CD14-positive monocyte (primary cell): ENCODE measurements at regions of chr11 and their contacts with region 1.

Region 1: GRCh38 chr11:96342961-96343711 is at the start of gene MAML2:
- DNase-seq: peak; percentile 89 to 97 (median 92)
- H3K4me3 ChIP-seq: peak within 1 kb of the TSS; percentile 75 to 100 (median 100)
- H3K4me3 Mint-ChIP-seq: peak within 1 kb of the TSS; percentile 95 to 98
- H3K27ac ChIP-seq: peak within 1 kb of the TSS in 1 of 2 donors; percentile 93
- H3K27ac Mint-ChIP-seq: peak within 1 kb of the TSS; percentile 85 to 99 (median 94)
- H3K4me1 ChIP-seq: peaks cover 43 to 50% of the 10 kb centered on the region in 2 donors
- H3K4me1 Mint-ChIP-seq: peaks cover 47% of the 10 kb centered on the region
- H3K27me3 ChIP-seq: no peaks in the 10 kb centered on the region
- H3K27me3 Mint-ChIP-seq: peaks cover 0 to 2% (median 0%) of the 10 kb centered on the region in 3 donors
- CTCF ChIP-seq: peak; percentile 93
- polyA plus RNA-seq, gene MAML2: 0.57 to 7.6 (median 1.2) TPM

Region 2: DNA sequence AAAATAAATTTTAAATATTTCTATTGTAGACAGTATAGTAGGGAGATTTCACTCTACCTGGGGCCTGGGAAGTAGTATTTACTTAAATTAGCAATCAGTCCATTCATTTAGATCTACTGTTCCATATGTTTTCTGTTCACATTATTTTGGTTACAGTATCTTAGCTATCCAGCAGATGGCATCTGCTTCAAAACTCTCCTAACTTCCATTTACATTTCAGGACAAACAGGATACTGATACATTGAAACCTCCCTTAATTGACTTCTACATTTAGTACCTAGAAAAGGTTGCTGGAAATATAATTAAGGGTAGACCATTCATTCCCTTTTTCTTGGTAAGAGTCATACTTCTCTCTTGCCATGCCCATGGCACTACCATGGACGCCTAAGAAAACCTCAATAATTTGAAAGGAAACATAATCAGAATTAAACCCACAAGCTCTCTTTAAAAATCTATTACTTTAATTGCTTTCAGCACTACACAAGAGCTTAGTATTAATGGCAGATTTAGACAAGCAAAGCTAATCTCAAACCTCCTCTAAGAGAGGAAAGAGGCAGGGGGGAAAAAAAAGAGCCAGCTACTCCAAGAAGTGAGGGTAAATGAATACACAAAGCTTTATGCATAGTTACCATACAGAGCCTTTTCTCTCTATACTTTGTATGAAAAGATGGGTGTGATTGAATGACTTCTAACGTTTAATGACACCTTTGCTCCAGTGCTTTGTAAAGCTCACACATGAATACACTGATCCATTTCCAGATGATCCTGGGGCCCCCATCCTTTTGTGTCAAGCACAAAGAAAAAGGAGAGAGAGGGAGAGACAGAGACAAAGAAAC is 288.0 kb before region 1 on chr11:
- intact Hi-C with region 1: loop called in 1 of 2 experiments (anchors 5 kb)
- DNase-seq: peak; percentile 8 to 27 (median 20)
- H3K4me3 ChIP-seq: no peak overlapping the region
- H3K4me3 Mint-ChIP-seq: no peak overlapping the region
- H3K27ac ChIP-seq: no peak overlapping the region
- H3K27ac Mint-ChIP-seq: peak overlapping the region in 1 of 7 donors; percentile 23
- H3K4me1 ChIP-seq: peaks cover 11 to 13% of the 10 kb centered on the region in 2 donors
- H3K4me1 Mint-ChIP-seq: peaks cover 12% of the 10 kb centered on the region
- H3K27me3 ChIP-seq: no peaks in the 10 kb centered on the region
- H3K27me3 Mint-ChIP-seq: no peaks in the 10 kb centered on the region
- CTCF ChIP-seq: peak; percentile 67

Region 3: GRCh38 chr11:96257972-96258934 is 84.9 kb before region 1 on chr11:
- intact Hi-C with region 1: loop called (anchors 5 to 10 kb)
- DNase-seq: peak; percentile 15 to 49 (median 40)
- H3K4me3 ChIP-seq: peak overlapping the region in 2 of 3 experiments; percentile 43 to 62
- H3K4me3 Mint-ChIP-seq: peak overlapping the region; percentile 41 to 67
- H3K27ac ChIP-seq: peak overlapping the region; percentile 1 to 86
- H3K27ac Mint-ChIP-seq: peak overlapping the region; percentile 73 to 94 (median 89)
- H3K4me1 ChIP-seq: peaks cover 75 to 87% of the 10 kb centered on the region in 2 donors
- H3K4me1 Mint-ChIP-seq: peaks cover 84% of the 10 kb centered on the region
- H3K27me3 ChIP-seq: no peaks in the 10 kb centered on the region
- H3K27me3 Mint-ChIP-seq: no peaks in the 10 kb centered on the region
- CTCF ChIP-seq: no peak

Region 4: GRCh38 chr11:96267496-96268032 is 75.6 kb before region 1 on chr11:
- intact Hi-C with region 1: loop called in 1 of 2 experiments (anchors 10 kb)
- DNase-seq: peak; percentile 24 to 65 (median 37)
- H3K4me3 ChIP-seq: peak overlapping the region in 2 of 3 experiments; percentile 16 to 37
- H3K4me3 Mint-ChIP-seq: peak overlapping the region; percentile 51 to 52
- H3K27ac ChIP-seq: peak overlapping the region in 1 of 2 donors; percentile 60
- H3K27ac Mint-ChIP-seq: peak overlapping the region; percentile 75 to 90 (median 80)
- H3K4me1 ChIP-seq: peaks cover 47 to 53% of the 10 kb centered on the region in 2 donors
- H3K4me1 Mint-ChIP-seq: peaks cover 58% of the 10 kb centered on the region
- H3K27me3 ChIP-seq: no peaks in the 10 kb centered on the region
- H3K27me3 Mint-ChIP-seq: peaks cover 0 to 2% (median 0%) of the 10 kb centered on the region in 3 donors
- CTCF ChIP-seq: no peak

Region 5: DNA sequence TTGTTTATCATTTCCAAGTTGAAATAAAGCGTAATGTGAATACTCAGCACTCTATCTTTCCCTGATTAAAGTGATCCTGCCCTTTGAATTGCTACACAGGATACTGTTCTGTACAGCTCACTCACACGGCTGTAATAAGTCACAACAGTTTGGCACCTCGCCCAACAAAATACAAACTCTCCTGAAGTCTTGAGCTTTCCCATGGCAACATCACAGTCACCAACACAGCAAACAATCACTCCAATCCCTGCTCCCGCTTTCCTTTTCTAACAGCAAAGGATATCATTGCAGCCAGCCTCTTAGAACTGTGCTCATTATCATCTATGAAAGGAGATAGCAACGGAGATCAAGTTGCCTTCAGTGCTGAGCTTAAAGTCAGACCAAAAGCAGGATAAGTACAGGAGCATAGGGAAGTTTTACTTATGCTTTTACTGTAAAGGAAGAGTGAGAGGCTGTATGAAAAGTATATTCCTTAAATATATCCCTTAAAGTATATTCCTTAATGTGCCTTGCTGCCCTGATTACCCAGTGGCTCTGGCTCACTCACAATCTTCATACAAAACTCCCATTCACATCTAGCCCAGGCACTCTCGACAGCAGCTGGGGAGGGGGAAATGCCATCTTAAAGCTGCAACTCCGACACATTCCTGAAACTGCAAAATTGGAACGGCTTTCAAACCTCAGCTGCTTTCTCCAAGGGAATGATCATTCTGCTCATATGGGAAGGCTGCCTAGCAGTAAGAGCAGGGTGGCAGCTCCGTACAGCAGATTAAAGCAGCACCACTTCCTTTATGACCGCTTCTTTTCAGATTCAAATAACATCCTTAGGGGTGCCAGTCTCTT is 36.0 kb before region 1 on chr11:
- intact Hi-C with region 1: loop called (anchors 5 kb)
- DNase-seq: peak; percentile 41 to 68 (median 59)
- H3K4me3 ChIP-seq: no peak overlapping the region
- H3K4me3 Mint-ChIP-seq: no peak overlapping the region
- H3K27ac ChIP-seq: peak overlapping the region in 1 of 2 donors; percentile 21
- H3K27ac Mint-ChIP-seq: peak overlapping the region in 3 of 7 donors; percentile 19 to 68 (median 28)
- H3K4me1 ChIP-seq: peaks cover 10 to 33% of the 10 kb centered on the region in 2 donors
- H3K4me1 Mint-ChIP-seq: peaks cover 42% of the 10 kb centered on the region
- H3K27me3 ChIP-seq: no peaks in the 10 kb centered on the region
- H3K27me3 Mint-ChIP-seq: no peaks in the 10 kb centered on the region
- CTCF ChIP-seq: no peak